Activated T-helper 1 cell treated with anti-CD3 and anti-CD28 coated beads, Interleukin-12 subunit alpha, Interleukin-12 subunit beta, Interleukin-2, Interleukin-4 antibody, amounts not matched to agents 30 ng/mL and 10 ng/mL and 1 ng/mL, durations not matched to agents 14 hours and 24 hours and 36 hours (primary cell): ENCODE measurements at regions of chr1 and their contacts with region 1.

Region 1: DNA sequence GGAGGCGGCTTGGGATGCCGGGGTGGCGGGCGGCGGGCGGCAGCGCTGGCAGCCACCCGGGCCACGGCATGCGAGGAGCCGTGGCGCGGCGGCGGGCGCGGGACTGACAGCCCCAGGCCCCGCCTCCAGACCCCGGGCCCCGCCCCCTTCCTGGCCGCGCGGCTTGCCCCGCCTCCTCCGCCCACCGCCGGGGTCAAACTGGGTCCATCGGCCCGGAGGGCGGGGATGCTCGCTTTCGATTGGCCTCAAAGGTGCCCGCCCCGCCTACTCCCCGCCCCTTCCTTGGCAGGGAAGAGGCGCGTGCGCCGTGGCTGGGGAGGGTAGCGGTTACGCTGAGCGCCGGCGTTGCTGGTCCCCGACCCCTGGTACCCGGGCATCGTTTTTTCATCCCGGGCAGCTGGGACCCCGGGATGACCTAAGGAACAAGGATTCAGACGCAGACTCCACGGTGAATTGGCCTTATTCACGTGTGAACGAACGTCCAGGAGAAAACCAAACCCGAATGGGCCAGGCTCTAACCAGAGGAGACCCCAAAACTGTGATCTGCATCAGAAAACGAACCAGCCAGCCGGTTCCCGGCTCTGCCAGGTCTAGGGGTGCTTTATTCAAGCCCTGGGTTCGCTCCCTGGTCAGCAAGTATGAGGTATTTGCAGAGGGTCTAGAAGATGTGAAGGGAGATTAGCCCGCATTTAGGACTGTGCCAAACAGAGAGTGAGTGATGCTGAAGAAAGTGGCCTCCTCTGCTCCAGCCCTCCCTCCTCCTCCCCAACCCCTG is 117.2 kb upstream of the GUCA2B start:
- DNase-seq: peak; percentile 96
- H3K4me3 Mint-ChIP-seq: peak overlapping the region; percentile 80
- H3K27ac Mint-ChIP-seq: no peak overlapping the region
- H3K4me1 Mint-ChIP-seq: peaks cover 40% of the 10 kb centered on the region
- H3K27me3 Mint-ChIP-seq: peaks cover 14% of the 10 kb centered on the region

Region 2: DNA sequence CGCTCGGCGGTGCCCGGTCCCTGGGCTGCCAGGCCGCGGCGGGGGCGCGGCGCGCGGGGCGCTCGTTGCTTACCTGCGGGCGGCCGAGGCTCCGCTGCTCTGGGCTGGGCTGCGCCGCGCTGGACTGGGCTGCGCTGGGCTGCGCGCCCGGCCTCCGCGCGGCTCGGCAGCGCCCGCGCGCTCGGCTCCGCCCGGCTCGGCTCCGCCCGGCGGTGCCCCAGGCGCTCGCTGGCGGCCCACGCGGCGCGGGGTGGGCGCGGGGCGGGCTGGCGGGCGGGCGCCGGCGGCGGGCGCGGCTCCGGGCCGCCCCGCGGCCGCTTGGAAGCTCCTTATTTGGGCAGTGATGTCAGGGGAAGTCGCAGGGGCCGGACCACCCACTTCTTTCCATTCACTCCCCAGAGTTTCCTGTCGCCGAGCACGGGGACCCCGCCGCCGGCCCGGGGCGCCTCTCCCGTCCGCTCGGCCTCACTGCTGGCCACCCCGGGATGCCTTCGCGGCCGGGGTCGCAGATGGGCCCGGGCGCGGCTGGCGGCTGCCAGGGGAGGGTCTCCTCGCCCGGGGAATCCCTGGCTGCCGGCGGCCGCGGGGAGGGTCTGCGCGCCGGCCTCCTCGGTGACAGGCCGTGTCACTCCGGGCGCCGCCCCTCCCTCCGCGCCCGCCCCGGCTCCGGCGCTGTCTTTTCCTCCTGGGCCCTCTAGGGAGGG is 373.8 kb before region 1 on chr1:
- intact Hi-C with region 1: loop called (anchors 1 kb)
- DNase-seq: peak; percentile 73
- H3K4me3 Mint-ChIP-seq: peak overlapping the region; percentile 70
- H3K27ac Mint-ChIP-seq: peak overlapping the region; percentile 65
- H3K4me1 Mint-ChIP-seq: peaks cover 83% of the 10 kb centered on the region
- H3K27me3 Mint-ChIP-seq: no peaks in the 10 kb centered on the region

Region 3: DNA sequence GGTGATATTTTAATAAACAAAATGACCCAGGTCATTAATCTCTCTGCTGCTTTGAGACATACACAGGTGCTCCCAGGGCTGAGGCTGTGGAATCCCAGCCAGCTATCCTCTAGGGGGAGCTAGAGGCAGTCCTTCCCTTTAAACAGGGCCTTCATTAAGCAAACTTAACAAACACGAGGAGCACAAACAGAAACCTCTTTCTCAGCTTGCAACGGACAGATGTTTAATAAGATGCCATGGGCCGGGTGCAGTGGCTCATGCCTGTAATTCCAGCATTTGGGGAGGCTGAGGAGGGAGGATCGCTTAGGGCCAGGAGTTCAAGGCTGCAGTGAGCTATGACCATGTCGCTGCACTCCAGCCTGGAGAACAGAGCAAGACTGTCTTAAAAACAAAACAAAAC is 224.0 kb before region 1 on chr1:
- intact Hi-C with region 1: loop called (anchors 1 kb)
- DNase-seq: peak; percentile 57
- H3K4me3 Mint-ChIP-seq: no peak overlapping the region
- H3K27ac Mint-ChIP-seq: peak overlapping the region; percentile 38
- H3K4me1 Mint-ChIP-seq: peaks cover 57% of the 10 kb centered on the region
- H3K27me3 Mint-ChIP-seq: peaks cover 2% of the 10 kb centered on the region

Region 4: DNA sequence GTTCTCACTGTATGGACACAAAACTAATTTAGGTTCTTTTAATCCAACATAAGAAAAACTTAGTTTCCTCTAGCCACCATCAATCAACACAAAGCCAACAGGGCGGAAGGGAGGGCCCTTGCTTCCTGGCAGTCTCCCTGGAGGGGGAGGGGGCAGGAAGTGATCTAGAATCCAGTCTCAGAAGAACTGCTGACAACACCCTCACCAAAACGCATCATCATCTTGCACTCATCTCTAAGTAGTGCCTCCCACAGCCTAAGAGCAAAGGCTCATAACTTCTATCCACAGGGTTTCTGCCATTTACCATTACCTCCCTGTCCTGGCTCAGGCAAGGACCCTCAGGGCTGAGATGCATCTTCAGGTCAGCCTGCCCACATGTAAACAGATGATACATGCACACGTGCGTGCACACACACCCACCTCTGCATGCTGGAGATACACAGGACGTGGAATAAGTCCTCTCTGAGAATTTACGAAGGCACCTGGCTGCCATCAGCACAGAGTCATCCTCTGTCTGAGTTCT is 137.8 kb before region 1 on chr1:
- intact Hi-C with region 1: loop called (anchors 1 kb)
- DNase-seq: peak; percentile 77
- H3K4me3 Mint-ChIP-seq: peak overlapping the region; percentile 78
- H3K27ac Mint-ChIP-seq: peak overlapping the region; percentile 94
- H3K4me1 Mint-ChIP-seq: peaks cover 86% of the 10 kb centered on the region
- H3K27me3 Mint-ChIP-seq: no peaks in the 10 kb centered on the region

Region 5: DNA sequence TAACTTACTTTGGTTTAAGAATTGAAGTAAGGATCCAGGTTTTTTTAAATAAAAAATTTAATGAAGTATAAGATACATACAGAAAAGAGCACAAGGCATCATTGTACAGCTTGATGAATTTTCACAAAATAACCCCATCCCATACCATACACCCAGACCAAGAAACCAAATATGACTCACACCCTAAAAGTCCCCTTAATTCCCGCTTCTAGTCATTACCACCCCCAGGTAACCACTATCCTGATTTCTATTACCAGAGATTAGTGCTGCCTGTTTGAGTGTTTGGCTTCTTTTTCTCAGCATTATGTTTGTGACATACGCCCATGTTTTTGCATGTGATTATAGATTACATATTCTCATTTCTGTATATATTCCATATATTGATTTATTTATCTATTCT is 18.8 kb before region 1 on chr1:
- intact Hi-C with region 1: loop called (anchors 1 kb)
- DNase-seq: no peak
- H3K4me3 Mint-ChIP-seq: no peak overlapping the region
- H3K27ac Mint-ChIP-seq: no peak overlapping the region
- H3K4me1 Mint-ChIP-seq: peaks cover 42% of the 10 kb centered on the region
- H3K27me3 Mint-ChIP-seq: no peaks in the 10 kb centered on the region

Region 6: DNA sequence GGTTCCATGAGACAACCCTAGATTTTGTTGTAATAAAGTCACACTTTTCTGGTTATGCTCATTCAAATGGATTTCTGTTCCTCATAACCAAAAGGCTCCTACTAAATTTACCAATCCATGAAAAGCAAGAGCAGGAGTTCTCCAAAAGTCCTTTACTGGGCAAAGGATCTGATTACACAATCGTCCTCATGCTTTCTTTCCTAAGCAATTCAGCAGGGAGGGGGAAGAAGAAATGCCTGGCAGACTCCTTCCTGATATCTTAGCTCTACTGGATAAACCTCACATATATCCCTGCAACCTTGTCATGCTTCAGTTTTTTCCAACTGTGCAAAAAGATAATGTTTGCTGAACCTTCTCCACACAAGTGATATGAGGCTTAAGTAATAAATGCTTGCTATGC is 49.6 kb after region 1 on chr1:
- intact Hi-C with region 1: no loop called
- DNase-seq: no peak
- H3K4me3 Mint-ChIP-seq: no peak overlapping the region
- H3K27ac Mint-ChIP-seq: no peak overlapping the region
- H3K4me1 Mint-ChIP-seq: no peaks in the 10 kb centered on the region
- H3K27me3 Mint-ChIP-seq: peaks cover 16% of the 10 kb centered on the region

Region 7: DNA sequence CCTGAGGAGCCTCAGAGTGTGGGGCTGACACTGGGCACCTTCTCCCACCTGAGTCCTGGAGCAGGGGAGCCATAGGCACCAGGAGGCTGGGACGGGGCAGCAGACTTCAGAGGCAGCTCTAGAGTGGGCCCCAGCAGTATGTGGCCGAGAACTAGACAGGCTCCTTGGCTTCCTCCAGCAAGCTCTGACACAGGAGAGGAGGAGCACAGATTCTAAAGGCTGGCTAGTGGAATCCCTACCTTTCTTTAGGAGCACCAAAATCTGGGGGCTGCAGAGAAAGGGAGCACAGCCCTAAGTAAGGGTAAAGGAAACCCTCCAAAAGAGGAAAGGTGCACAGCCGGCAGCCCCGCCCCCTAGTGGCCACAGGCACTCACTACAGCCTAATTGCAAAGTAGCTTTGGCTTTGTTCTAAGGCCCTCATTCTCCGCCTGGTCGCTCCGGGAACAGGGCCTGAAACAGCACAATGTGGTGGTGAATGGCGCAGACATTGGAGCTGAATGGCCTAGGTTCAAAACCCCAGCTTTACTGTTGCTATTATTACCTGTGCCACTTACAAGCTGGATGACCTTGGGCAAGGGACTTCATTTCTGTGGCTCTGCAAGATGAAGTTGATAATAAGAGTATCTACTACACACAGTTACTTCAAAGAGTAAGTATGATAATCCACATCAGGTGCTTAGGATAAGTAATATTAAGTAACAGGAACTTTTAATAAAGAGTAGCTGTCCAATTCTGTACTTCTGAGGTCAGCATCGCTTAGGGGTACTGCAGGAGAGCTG is 137.3 kb after region 1 on chr1:
- intact Hi-C with region 1: no loop called
- DNase-seq: peak; percentile 35
- H3K4me3 Mint-ChIP-seq: no peak overlapping the region
- H3K27ac Mint-ChIP-seq: no peak overlapping the region
- H3K4me1 Mint-ChIP-seq: no peaks in the 10 kb centered on the region
- H3K27me3 Mint-ChIP-seq: no peaks in the 10 kb centered on the region